CD8-positive, alpha-beta T cell (primary cell): ENCODE measurements at regions of chr1 and their contacts with region 1.

Region 1: DNA sequence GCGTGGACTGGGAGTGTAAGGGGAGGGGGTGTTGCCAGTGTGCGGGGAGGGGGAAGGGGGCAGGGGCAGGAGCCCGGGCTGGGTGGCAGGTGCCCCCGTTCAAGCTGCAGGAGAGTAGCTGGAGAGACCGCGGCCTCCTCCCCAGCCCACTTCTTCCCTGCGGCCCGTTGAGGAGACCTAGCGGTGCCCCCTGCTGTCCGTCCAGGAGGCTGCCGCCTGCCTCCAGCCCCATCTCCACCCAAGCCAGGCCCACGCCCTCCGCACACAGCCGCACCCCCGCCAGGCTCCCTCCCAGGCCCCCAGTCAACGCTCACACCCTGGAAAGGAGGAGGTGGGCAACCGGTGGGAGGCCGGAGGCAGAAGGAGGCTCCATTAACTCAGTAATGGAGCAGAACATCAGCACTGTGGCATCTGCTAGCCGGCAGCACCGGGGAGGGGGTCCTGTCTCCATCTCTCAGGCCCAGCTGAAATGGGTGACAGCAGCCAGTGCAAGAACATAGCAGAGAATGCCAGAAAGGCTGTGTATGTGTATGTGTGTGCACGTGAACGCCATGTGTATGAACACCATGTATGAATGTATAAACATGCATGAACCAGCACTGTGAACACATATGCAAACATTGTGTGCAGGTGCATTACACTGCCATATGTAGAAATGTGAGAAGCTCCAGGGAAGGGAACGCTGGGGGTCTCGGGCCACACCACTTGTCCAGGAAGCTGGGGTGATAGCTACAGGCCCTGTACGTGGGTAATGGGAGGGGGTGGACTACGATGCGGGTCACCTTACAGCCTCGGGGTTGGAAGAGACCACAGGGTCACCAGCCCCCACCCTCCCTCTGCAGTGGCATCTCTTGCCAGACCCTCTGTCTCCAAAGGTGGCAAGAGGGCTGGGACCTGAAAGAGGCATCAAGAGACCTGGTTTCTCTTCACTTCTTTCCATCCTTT is 84.6 kb downstream of the SYT2 start:
- DNase-seq: peak; percentile 17 to 75 (median 58)
- ATAC-seq: peak; percentile 55
- H3K4me3 ChIP-seq: no peak overlapping the region
- H3K4me3 Mint-ChIP-seq: no peak overlapping the region
- H3K27ac ChIP-seq: no peak overlapping the region
- H3K27ac Mint-ChIP-seq: no peak overlapping the region
- H3K4me1 ChIP-seq: peaks cover 47% of the 10 kb centered on the region
- H3K4me1 Mint-ChIP-seq: peaks cover 39% of the 10 kb centered on the region
- H3K27me3 ChIP-seq: peaks cover 0 to 11% of the 10 kb centered on the region in 2 experiments
- H3K27me3 Mint-ChIP-seq: peaks cover 25% of the 10 kb centered on the region
- CTCF ChIP-seq: peak; percentile 35

Region 2: GRCh38 chr1:202462342-202463076 is 163.2 kb before region 1 on chr1:
- CTCF ChIA-PET with region 1: no interaction called
- POLR2A ChIA-PET with region 1: no interaction called
- intact Hi-C with region 1: loop called in 1 of 2 experiments (anchors 5 kb)
- DNase-seq: no peak
- ATAC-seq: no peak
- H3K4me3 ChIP-seq: no peak overlapping the region
- H3K4me3 Mint-ChIP-seq: no peak overlapping the region
- H3K27ac ChIP-seq: no peak overlapping the region
- H3K27ac Mint-ChIP-seq: peak overlapping the region; percentile 16
- H3K4me1 ChIP-seq: no peaks in the 10 kb centered on the region
- H3K4me1 Mint-ChIP-seq: no peaks in the 10 kb centered on the region
- H3K27me3 ChIP-seq: no peaks in the 10 kb centered on the region
- H3K27me3 Mint-ChIP-seq: no peaks in the 10 kb centered on the region
- CTCF ChIP-seq: no peak